ENCODE measurements at regions of chr2 and their contacts with region 1.

Region 1: DNA sequence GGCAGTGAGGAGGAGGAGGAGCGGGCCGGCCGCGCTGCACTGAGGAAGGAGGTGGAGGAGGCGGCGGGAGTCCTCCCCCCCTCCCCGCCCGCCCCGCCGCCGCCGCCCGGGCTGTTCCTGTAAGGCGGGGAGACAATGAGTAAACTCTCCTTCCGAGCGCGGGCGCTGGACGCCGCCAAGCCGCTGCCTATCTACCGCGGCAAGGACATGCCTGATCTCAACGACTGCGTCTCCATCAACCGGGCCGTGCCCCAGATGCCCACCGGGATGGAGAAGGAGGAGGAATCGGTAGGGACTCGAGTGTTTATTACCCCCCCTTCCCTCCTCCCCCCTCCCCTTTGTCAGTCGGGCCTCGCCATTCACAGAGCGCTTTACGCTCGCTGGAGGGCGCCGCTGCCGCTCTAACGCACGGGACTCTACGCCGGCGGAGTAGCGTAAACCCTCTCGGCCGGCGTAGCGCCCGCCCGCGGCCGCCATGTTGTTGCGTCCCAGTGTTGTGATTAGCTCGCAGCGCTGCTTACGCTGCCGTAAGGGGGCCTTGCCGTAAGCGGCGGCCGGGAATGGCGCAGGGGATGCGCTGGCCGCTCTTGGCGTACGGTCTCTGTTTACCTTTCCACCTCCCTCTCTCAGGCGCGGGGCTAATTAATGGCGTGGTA is 460 bp downstream of the EPC2 start:
- DNase-seq: peak; percentile 92
- H3K4me3 Mint-ChIP-seq: peak overlapping the region; percentile 93
- H3K27ac Mint-ChIP-seq: peak overlapping the region; percentile 96
- H3K4me1 Mint-ChIP-seq: peaks cover 31% of the 10 kb centered on the region
- H3K27me3 Mint-ChIP-seq: peaks cover 7% of the 10 kb centered on the region

Region 2: DNA sequence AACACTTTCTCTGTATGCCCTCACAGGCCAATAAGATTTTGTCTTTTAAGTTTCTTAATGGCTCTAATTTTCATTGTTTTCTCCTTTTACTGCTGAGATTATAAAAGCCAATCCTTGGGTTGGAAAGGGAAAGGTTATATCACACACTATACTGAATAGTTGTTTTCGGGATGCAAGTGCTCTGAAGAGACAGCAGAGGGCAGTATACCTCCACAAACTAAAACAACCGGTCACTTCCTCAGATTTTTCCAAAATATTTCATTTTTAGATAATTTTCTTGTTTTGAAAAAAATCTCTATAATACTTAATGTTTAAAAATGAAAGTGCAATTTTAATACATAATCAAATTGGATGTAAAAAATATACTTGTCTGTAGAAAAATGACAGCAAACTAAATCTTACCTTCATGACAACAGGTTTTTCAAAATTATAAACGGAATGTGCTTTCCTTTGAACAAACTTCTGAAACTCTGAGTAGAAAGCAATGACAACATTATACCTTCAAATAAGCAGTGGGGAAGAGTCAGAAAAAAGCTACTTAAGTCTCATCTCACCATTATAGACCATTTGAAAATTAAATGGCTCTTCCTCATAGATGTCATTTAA is 707.2 kb before region 1 on chr2:
- intact Hi-C with region 1: loop called (anchors 10 kb)
- DNase-seq: no peak
- H3K4me3 Mint-ChIP-seq: no peak overlapping the region
- H3K27ac Mint-ChIP-seq: no peak overlapping the region
- H3K4me1 Mint-ChIP-seq: no peaks in the 10 kb centered on the region
- H3K27me3 Mint-ChIP-seq: no peaks in the 10 kb centered on the region

Region 3: GRCh38 chr2:148509288-148509902 is 135.6 kb before region 1 on chr2:
- intact Hi-C with region 1: loop called (anchors 1 kb)
- DNase-seq: peak; percentile 77
- H3K4me3 Mint-ChIP-seq: peak overlapping the region; percentile 61
- H3K27ac Mint-ChIP-seq: peak overlapping the region; percentile 79
- H3K4me1 Mint-ChIP-seq: peaks cover 40% of the 10 kb centered on the region
- H3K27me3 Mint-ChIP-seq: peaks cover 2% of the 10 kb centered on the region

Region 4: DNA sequence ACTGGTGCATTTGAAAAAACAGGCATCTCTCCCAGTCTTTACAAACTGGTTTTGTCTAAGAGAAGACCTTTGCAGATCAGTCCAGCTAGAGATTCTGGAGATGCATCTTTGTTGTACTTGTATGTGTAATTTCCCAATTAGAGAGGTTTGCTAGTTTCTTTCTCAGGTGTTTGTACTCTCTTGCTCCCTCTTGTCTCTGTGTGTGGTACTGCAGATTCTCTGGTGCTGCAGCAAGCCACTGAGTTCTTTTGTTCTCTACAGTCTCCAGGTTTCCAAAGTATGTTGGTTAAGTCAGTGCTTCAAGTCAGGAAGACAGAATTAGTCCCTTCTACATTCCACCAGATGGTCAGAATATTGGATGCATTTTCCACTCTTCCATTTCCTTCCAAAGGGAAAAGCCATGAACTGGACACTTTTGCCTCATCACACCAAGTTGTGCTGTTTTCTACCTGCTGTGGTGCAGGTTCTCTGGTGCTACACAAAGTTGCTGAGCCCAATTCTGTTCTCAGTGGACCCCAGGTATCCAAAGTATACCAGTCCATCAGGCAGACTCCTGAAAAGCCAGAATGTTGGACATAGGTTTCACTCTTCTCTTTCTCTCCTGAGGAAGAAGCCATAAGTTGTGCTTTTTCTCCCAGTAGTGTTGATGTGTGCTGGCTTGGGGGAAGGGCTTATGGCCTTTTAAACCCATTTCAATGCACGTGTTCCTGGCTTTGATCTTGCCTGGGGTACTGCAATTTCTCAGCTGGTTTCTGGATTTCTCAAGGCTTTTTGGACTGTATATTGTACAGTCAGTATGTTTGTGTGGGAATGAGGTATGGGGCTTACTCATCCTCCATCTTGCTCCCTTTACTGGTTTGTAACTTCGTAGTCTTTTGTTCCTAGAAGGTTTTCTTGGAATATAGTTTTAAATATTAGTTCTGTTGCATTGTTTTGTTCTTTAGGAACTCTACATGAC is 29.3 kb after region 1 on chr2:
- intact Hi-C with region 1: loop called (anchors 1 kb)
- DNase-seq: peak; percentile 14
- H3K4me3 Mint-ChIP-seq: no peak overlapping the region
- H3K27ac Mint-ChIP-seq: no peak overlapping the region
- H3K4me1 Mint-ChIP-seq: peaks cover 56% of the 10 kb centered on the region
- H3K27me3 Mint-ChIP-seq: no peaks in the 10 kb centered on the region

Region 5: DNA sequence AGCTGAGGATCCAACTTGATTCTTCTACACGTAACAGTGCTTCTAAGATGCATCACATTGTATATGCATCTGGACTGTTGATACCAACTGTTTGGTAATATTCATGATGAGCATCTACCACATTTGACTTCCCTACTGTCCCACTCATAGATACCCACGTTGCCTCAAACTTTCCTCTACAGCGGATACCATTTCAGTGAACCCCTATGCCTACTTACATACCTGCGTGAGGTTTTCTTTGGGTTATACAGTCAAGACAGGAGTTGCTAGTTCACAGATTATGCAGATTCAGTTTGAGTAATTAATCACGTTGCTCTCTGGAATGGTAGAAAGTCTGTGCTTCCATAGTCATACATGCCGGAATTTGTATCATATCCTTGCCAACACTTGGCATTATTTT is 39.5 kb after region 1 on chr2:
- intact Hi-C with region 1: no loop called
- DNase-seq: no peak
- H3K4me3 Mint-ChIP-seq: no peak overlapping the region
- H3K27ac Mint-ChIP-seq: no peak overlapping the region
- H3K4me1 Mint-ChIP-seq: peaks cover 28% of the 10 kb centered on the region
- H3K27me3 Mint-ChIP-seq: no peaks in the 10 kb centered on the region

Region 6: DNA sequence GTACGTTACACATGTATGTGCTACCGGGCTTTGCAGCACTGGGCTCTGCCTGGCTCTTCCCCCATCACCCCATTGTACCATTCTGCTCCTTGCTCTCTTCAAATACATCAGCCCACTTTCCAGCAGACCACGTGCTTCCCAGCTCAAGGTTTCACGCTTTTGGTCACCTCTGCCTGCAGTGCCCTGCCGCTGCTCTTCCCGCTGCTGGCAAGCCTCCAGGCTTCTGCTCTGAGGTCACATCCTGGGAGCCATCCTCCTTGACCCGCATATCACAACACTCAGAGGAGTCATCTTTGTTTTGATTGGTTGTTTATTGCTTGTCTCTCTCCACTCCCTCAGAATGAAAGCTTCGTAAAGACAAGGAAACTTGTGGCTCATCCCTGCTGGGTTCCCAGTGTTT is 264.1 kb after region 1 on chr2:
- intact Hi-C with region 1: no loop called
- DNase-seq: no peak
- H3K4me3 Mint-ChIP-seq: no peak overlapping the region
- H3K27ac Mint-ChIP-seq: no peak overlapping the region
- H3K4me1 Mint-ChIP-seq: no peaks in the 10 kb centered on the region
- H3K27me3 Mint-ChIP-seq: peaks cover 2% of the 10 kb centered on the region

Region 7: DNA sequence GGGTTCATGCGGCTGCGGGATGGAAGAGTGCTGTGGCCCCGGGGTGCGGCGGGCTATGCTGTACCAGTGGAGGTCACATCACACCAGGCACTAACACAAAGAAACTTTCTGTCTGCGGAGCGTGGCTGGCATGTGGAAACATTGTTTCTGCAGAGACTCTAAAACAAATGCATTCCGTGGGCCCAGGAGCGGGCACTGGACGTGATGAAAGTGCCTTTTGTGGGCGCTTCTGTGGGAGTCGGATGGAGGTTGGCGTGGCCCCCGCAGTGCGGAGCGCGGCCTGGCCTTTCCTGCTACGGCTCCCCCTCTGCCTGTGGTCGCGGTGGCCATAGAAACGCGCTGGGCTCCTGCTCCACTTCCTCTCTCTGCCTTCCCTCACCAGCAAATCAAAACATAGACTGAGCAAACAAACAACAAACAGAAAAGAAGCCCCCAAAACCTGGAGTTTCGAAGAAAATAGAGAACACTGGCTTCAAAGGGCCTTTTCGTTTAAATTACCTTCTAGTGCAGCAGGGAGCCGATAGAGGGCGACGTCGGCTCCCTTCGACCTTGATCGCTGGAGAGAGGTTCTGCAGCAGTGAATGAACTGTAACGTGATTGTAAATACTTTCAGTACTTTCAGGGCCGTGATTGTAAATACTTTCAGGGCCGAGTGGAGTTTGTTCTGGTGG is 281.4 kb after region 1 on chr2:
- intact Hi-C with region 1: loop called (anchors 2 kb)
- DNase-seq: peak; percentile 52
- H3K4me3 Mint-ChIP-seq: peak overlapping the region; percentile 87
- H3K27ac Mint-ChIP-seq: peak overlapping the region; percentile 86
- H3K4me1 Mint-ChIP-seq: peaks cover 26% of the 10 kb centered on the region
- H3K27me3 Mint-ChIP-seq: no peaks in the 10 kb centered on the region